PC-9 (cell line): ENCODE measurements at regions of chr11 and their contacts with region 1.

Region 1: DNA sequence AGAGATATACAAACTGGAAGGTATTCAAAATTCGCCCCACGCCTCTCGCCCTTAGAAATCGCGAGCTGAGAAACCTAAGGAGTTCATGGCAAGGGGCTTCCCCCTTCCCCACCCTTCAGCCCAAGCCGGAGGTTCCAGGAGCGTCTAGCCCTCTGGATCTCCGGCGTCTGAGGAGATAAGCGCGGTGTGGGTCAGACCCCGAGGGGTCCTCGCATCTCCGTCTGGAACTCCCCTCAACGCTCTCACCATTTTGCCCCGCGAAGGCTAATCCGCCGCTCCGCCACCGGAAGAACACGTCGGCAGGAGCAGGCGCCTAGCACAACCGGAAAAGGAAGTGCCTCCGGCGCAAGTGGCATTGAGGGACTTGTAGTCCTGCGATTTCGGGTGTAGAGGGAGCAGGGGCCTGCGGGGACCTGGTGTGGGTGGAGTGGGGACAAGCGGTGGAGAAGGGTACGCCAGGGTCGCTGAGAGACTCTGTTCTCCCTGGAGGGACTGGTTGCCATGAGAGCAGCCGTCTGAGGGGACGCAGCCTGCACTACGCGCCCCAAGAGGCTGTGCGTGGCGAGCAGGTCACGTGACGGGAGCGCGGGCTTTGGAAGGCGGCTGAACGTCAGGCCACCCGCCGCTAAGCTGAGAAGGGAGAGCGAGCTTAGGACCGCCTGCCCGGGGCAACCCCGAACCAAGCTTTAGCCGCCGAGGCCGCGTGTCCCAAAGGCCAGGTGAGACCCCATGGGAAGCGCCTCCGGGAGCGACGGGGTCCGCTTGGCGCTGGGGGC is at the starts of genes FEN1 and TMEM258:
- DNase-seq: peak; percentile 89 to 90
- H3K4me3 ChIP-seq: peak within 1 kb of the TSS; percentile 72
- H3K27ac ChIP-seq: peak within 1 kb of the TSS; percentile 81
- H3K4me1 ChIP-seq: peaks cover 20% of the 10 kb centered on the region
- H3K27me3 ChIP-seq: no peaks in the 10 kb centered on the region
- CTCF ChIP-seq: no peak; the same call in 1 of the 2 replicates
- total RNA-seq, gene FEN1: 56.5 and 60.9 TPM in 2 replicates
- total RNA-seq, gene TMEM258: 141 and 217 TPM in 2 replicates

Region 2: DNA sequence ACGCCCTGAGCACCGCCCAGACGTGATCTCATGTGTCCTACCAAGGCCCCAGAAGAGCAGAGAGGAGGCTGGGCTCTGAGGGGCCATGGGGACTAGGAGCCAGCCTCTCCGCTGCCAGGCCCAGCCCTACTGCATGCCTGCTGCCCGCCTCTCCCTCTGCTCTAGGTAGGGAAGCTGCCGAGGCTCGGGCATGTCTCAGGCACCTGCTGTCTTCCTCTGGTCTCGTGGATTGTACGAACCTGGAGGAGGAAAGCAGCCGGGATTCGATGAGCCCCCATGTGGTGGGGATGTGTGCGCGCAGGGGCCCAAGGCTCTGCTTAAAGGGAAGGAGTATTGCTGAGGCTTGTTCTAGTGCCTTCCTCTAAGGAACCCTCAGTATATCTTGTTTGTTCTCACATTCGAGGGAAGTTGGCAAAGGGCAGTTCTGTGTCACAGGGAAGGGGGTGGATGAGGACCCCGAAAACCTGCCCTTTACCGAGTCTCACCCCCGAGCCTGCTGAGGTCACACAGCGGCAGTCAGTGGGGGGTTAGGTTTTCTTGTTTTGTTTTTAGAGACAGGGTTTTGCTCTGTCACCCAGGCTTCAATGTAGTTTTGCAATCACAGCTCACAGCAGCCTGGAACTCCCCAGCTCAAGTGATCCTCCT is 91.1 kb before region 1 on chr11:
- CTCF ChIA-PET with region 1: no interaction called
- POLR2A ChIA-PET with region 1: no interaction called
- intact Hi-C with region 1: no loop called
- DNase-seq: no peak
- H3K4me3 ChIP-seq: no peak overlapping the region
- H3K27ac ChIP-seq: peak overlapping the region; percentile 96; the same call in 1 of the 2 replicates
- H3K4me1 ChIP-seq: peaks cover 56% of the 10 kb centered on the region
- H3K27me3 ChIP-seq: no peaks in the 10 kb centered on the region
- CTCF ChIP-seq: peak; percentile 38; the same call in 1 of the 2 replicates

Region 3: DNA sequence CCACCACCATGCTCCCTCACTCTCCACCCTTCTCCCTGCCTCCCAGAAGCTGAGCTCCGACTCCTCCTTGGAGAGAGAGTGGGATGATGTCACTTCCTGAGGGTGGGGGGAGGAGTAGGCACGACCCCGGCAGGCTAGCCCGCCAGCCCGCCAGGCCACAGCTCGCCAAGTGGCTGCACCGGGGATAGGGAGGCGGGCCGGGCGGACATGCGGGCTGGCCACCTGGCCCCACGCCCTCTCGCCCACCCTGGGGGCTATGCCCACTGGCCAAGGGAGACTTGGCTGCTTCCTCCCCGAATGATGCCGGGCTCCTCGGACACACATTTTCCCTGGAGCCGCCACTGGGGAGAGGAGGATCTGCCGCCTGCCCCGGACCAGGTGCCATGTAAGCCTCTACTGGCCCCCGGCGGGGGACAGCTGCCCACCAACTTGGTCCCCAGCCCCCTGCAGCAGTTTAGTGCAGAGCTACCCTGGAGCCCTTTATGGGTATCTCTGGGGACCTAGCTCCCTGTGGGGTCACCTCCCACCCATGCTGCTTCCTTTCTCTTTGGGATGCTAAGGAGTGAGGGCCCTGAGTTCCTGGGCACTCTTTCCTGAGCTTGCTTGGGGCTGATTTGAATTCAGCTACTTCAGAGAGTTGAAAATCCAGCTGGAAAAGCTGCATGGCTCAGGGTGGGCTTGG is 73.7 kb before region 1 on chr11:
- CTCF ChIA-PET with region 1: no interaction called
- POLR2A ChIA-PET with region 1: no interaction called
- intact Hi-C with region 1: no loop called
- DNase-seq: no peak
- H3K4me3 ChIP-seq: no peak overlapping the region
- H3K27ac ChIP-seq: no peak overlapping the region
- H3K4me1 ChIP-seq: no peaks in the 10 kb centered on the region
- H3K27me3 ChIP-seq: no peaks in the 10 kb centered on the region
- CTCF ChIP-seq: no peak

Region 4: GRCh38 chr11:61733120-61733978 is 59.1 kb before region 1 on chr11:
- CTCF ChIA-PET with region 1: no interaction called
- POLR2A ChIA-PET with region 1: no interaction called
- intact Hi-C with region 1: no loop called
- DNase-seq: peak; percentile 71 to 85
- H3K4me3 ChIP-seq: no peak overlapping the region
- H3K27ac ChIP-seq: no peak overlapping the region
- H3K4me1 ChIP-seq: peaks cover 35% of the 10 kb centered on the region
- H3K27me3 ChIP-seq: no peaks in the 10 kb centered on the region
- CTCF ChIP-seq: peak; percentile 98

Region 5: GRCh38 chr11:61747192-61747966 is 45.1 kb before region 1 on chr11:
- CTCF ChIA-PET with region 1: interaction called, 7 read pairs
- POLR2A ChIA-PET with region 1: no interaction called
- intact Hi-C with region 1: loop called (anchors 5 kb)
- DNase-seq: peak; percentile 65 to 86
- H3K4me3 ChIP-seq: no peak overlapping the region
- H3K27ac ChIP-seq: no peak overlapping the region
- H3K4me1 ChIP-seq: peaks cover 18% of the 10 kb centered on the region
- H3K27me3 ChIP-seq: no peaks in the 10 kb centered on the region
- CTCF ChIP-seq: peak; percentile 98

Region 6: DNA sequence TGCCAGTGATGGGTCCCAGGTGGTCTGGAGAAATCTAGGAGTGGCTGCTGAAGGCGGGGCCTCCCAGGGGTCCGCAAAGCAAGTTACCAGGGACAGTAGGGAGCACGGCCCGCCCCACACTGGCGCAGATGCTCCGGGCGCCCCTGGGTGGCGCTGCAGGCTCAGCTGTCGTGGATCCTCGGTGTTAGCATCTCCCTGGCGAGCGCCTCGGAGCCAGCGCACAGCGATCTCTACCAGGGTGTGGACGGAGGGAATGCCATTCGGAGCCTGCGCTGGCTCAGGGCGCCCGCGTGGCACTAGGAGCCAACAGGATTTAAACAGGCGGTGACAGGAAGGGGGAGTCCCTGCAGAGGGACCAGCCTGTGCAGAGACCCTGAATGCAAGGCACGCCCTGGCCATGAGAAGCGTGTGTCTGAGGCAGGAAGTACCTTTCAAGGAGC is 78.7 kb after region 1 on chr11:
- CTCF ChIA-PET with region 1: interaction called, 6 read pairs
- POLR2A ChIA-PET with region 1: no interaction called
- intact Hi-C with region 1: loop called (anchors 1 kb)
- DNase-seq: peak; percentile 65 to 89
- H3K4me3 ChIP-seq: no peak overlapping the region
- H3K27ac ChIP-seq: no peak overlapping the region
- H3K4me1 ChIP-seq: 0 out of 2 replicates have a peak, but pooled peaks cover 3% of the 10 kb centered on the region
- H3K27me3 ChIP-seq: no peaks in the 10 kb centered on the region
- CTCF ChIP-seq: peak; percentile 97

Region 7: GRCh38 chr11:61947486-61948210 is 155.2 kb after region 1 on chr11:
- CTCF ChIA-PET with region 1: interaction called, 6 read pairs
- POLR2A ChIA-PET with region 1: no interaction called
- intact Hi-C with region 1: loop called (anchors 1 kb)
- DNase-seq: peak; percentile 61 to 77
- H3K4me3 ChIP-seq: no peak overlapping the region
- H3K27ac ChIP-seq: no peak overlapping the region
- H3K4me1 ChIP-seq: peaks cover 23% of the 10 kb centered on the region
- H3K27me3 ChIP-seq: no peaks in the 10 kb centered on the region
- CTCF ChIP-seq: peak; percentile 95

Region 8: DNA sequence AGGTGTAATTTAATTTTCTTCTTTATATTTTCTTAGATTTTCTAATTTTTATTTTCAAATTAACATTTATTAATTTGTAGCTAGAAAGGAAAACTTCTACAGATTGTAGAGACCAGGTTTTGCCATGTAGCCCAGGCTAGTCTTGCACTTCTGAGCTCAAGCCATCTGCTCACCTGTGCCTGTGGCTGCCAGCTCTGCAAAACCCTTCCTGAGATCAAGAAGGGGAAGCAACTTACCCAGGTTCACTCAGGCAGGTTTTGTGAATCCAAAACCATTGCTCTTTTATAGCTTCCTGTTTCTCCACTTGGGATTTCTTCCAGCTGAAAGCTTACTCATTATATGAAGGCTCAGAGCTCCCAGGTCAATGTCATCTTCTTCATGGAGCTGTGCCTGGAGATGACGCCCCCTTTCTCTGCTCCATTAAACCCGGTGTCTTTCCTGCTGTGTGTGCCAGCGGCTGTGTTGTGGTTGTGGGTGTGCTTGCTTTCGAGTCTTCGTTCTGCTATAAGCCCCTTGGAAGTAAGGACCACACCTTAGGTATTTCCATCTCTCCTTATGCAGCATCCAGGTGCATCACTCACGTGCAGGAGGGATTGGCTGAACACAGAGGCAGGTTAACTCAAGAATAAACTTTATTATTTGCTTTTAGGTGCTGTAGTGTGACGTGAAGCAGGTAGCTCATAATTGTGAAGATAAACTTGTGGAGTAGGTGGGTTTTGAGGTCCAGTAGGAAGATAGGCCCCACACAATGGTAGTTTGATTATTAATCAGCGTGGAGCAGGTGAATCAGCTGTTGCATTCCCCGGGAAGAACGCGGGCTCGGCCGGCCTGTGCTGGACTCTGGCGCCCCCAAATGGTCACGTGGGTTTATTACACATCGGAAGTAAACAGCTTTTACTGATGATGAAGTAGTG is 289.1 kb after region 1 on chr11:
- CTCF ChIA-PET with region 1: interaction called, 21 read pairs
- POLR2A ChIA-PET with region 1: no interaction called
- intact Hi-C with region 1: loop called (anchors 1 kb)
- DNase-seq: peak; percentile 66 to 82
- H3K4me3 ChIP-seq: no peak overlapping the region
- H3K27ac ChIP-seq: no peak overlapping the region
- H3K4me1 ChIP-seq: no peaks in the 10 kb centered on the region
- H3K27me3 ChIP-seq: no peaks in the 10 kb centered on the region
- CTCF ChIP-seq: peak; percentile 98

Region 9: GRCh38 chr11:62123669-62124185 is 331.2 kb after region 1 on chr11 and contains the start of gene INCENP:
- CTCF ChIA-PET with region 1: no interaction called
- POLR2A ChIA-PET with region 1: interaction called, 3 read pairs
- intact Hi-C with region 1: loop called (anchors 5 kb)
- DNase-seq: peak; percentile 96 to 99
- H3K4me3 ChIP-seq: peak within 1 kb of the TSS; percentile 89
- H3K27ac ChIP-seq: no peak within 1 kb of the TSS
- H3K4me1 ChIP-seq: peaks cover 20% of the 10 kb centered on the region
- H3K27me3 ChIP-seq: no peaks in the 10 kb centered on the region
- CTCF ChIP-seq: no peak
- total RNA-seq, gene INCENP: 122 and 154 TPM in 2 replicates